ENCODE measurements at regions of chr15 and their contacts with region 1.

Region 1: DNA sequence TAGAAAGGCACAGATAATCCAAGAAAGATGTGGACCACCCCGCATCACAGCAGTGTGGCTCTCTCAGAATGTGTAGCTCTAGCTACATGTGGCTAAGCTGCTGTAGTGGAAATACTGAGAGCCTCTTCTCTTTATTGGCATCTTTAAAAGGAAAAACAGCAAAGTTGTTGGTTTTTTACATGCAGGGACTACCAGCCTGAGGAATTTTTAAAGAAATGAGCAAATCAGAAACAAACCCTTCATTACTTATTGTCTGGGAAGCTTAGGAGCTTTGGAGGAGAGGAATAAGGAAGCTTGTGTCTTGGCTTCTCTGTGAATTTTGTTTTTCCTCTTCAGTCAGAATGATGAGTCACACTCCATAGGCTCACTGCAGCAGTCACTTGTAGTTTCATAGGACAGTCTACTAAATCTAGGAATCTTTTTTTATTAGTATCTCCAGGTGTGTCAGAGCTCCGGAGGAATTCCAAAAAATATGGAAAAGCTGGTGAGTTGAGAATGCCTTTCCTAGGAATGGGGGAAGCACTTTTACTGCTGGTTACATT is 27.5 kb downstream of the POLG start:
- DNase-seq: no peak
- ATAC-seq: no peak
- H3K4me3 Mint-ChIP-seq: no peak overlapping the region
- H3K27ac Mint-ChIP-seq: peak overlapping the region; percentile 33
- H3K4me1 Mint-ChIP-seq: peaks cover 10% of the 10 kb centered on the region
- H3K27me3 Mint-ChIP-seq: no peaks in the 10 kb centered on the region

Region 2: DNA sequence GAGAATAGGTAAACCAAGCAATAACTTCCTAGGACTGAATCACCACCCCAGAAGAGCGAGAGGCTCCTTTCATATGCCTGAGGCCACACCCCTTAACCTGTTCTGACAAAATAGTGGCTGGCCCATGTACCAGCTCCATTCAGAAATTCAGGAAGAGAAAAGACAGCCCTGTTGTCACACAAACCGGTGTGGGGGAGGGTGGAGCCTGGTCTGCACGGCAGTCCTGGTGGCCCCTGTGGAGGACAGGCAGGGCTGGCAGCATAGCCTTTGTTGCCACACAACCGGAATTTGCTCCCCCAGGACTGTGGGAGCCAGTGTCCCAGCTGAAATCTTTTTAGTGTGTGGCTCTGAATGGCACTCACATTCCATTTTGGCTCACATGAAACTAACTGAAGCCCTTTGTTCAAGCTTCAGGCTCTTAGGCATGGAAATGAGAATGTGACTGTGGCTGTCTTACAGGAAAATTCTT is 109.6 kb before region 1 on chr15:
- CTCF ChIA-PET with region 1: no interaction called
- DNase-seq: peak; percentile 47
- ATAC-seq: peak; percentile 68
- H3K4me3 Mint-ChIP-seq: no peak overlapping the region
- H3K27ac Mint-ChIP-seq: peak overlapping the region; percentile 71
- H3K4me1 Mint-ChIP-seq: peaks cover 20% of the 10 kb centered on the region
- H3K27me3 Mint-ChIP-seq: no peaks in the 10 kb centered on the region

Region 3: GRCh38 chr15:89329329-89330084 is 22.4 kb after region 1 on chr15:
- CTCF ChIA-PET with region 1: interaction called, 12 read pairs
- DNase-seq: peak; percentile 85
- ATAC-seq: peak; percentile 54
- H3K4me3 Mint-ChIP-seq: peak overlapping the region; percentile 65
- H3K27ac Mint-ChIP-seq: peak overlapping the region; percentile 88
- H3K4me1 Mint-ChIP-seq: peaks cover 58% of the 10 kb centered on the region
- H3K27me3 Mint-ChIP-seq: no peaks in the 10 kb centered on the region